ENCODE measurements at regions of chr18 and their contacts with region 1.

Region 1: GRCh38 chr18:31555971-31556747 is 35.5 kb upstream of the TTR start:
- DNase-seq: peak in 1 of 3 donors; percentile 72
- ATAC-seq: peak; percentile 90
- H3K4me3 ChIP-seq: no peak overlapping the region
- H3K4me1 ChIP-seq: no peaks in the 10 kb centered on the region
- CTCF ChIP-seq: peak; percentile 54

Region 2: DNA sequence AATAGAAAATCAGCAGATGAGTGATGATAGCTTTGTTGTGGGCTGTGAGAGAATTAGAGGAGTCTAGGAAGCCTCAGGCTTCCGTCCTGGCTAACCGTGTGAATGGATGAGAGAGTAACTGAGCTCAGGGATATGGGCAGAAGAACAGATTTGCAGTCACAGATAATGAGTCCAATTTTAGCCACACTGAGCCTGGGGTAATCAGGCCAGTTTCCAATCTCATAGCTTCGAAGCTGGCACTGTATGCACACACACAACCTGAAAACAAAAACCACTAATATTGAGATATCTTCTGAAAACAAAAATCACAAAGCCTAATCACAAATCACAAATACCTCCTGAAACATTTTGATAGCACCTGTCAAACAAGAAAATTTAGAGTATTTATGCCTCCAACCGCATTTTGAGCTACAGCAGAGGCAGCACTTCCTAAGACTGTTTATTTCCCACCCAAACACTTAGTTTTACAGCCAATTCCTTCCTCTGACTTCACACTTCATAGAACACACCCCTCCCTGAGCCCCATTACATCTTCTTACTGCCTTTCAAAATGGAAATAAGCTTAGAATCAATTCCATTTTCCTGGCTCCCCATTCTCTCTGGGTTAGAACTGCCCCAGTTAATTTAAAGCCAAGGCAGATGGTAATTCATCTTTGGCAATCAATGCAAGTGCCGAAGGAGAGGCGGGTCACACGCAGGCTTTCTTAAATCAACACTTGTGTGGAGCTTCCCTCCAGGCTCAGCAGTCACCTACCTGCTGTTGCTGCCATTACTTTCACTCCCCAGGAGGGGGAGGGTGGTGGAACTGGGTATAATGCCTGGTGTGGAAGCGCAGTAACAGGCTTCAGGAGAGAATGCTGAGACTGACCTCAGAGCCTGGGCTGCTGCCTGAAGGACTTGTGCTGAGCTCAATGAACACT is 54.4 kb after region 1 on chr18:
- intact Hi-C with region 1: no loop called
- DNase-seq: peak in 2 of 3 donors; percentile 44 to 61
- ATAC-seq: peak; percentile 96
- H3K4me3 ChIP-seq: no peak overlapping the region
- H3K4me1 ChIP-seq: peaks cover 3% of the 10 kb centered on the region
- CTCF ChIP-seq: no peak

Region 3: GRCh38 chr18:31722369-31722957 is 166.3 kb after region 1 on chr18:
- intact Hi-C with region 1: loop called (anchors 5 to 10 kb)
- DNase-seq: peak in 2 of 3 donors; percentile 79 to 94
- ATAC-seq: peak; percentile 94
- H3K4me3 ChIP-seq: no peak overlapping the region
- H3K4me1 ChIP-seq: peaks cover 5% of the 10 kb centered on the region
- CTCF ChIP-seq: peak; percentile 73

Region 4: GRCh38 chr18:31977270-31977872 is 421.2 kb after region 1 on chr18:
- intact Hi-C with region 1: loop called in 1 of 2 experiments (anchors 10 kb)
- DNase-seq: peak in 1 of 3 donors; percentile 17
- ATAC-seq: peak; percentile 40
- H3K4me3 ChIP-seq: no peak overlapping the region
- H3K4me1 ChIP-seq: no peaks in the 10 kb centered on the region
- CTCF ChIP-seq: peak; percentile 32